HepG2 (cell line): ENCODE measurements at regions of chr3 and their contacts with region 1.

Region 1: GRCh38 chr3:116770815-116771450 is 61.4 kb downstream of the TUSC7 start:
- DNase-seq: peak; percentile 79
- ATAC-seq: peak; percentile 98
- H3K4me3 ChIP-seq: no peak overlapping the region
- H3K27ac ChIP-seq: no peak overlapping the region
- H3K4me1 ChIP-seq: no peaks in the 10 kb centered on the region
- H3K27me3 ChIP-seq: no peaks in the 10 kb centered on the region
- CTCF ChIP-seq: peak; percentile 93
- EP300 ChIP-seq: no peak
- POLR2A ChIP-seq: no peak
- RAD21 ChIP-seq: peak; percentile 69

Region 2: DNA sequence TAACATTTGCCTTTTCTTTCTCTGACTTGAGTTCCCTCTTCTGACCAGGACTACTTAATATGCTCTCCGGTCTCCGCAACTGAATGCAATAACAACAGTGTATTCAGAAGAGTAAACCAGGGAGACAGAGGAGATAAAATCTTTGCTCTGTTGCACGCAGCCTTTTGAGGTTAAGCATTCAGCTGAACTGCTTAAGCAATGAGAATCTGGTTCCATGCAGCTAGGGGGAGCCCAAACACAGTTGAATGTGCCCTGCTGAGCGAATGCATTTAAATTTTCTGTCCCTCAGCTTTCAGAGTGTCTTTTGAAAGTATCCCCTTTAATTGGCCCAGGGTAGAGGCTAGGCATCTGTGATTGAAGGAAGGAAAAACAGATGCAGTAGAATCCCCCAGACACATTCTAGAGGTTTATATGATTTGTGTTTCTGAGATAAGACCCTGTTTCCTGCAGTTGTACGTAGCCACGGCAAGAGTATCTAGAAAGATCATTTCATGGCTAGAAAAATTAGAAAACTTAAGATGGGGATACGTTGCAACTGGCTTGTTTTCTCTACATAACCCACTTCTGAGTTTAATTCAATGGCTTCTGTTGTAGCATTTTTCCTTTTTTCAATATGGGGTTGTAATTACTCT is 248.3 kb after region 1 on chr3:
- CTCF ChIA-PET with region 1: no interaction called
- POLR2A ChIA-PET with region 1: no interaction called
- in situ Hi-C with region 1: no loop called
- intact Hi-C with region 1: loop called (anchors 2 kb)
- DNase-seq: peak; percentile 10
- ATAC-seq: peak; percentile 97
- H3K4me3 ChIP-seq: no peak overlapping the region
- H3K27ac ChIP-seq: no peak overlapping the region
- H3K4me1 ChIP-seq: no peaks in the 10 kb centered on the region
- H3K27me3 ChIP-seq: peaks cover 0 to 18% of the 10 kb centered on the region in 2 experiments; a peak in 2 of 5 replicates
- CTCF ChIP-seq: peak; percentile 76
- EP300 ChIP-seq: no peak
- POLR2A ChIP-seq: no peak
- RAD21 ChIP-seq: no peak

Region 3: DNA sequence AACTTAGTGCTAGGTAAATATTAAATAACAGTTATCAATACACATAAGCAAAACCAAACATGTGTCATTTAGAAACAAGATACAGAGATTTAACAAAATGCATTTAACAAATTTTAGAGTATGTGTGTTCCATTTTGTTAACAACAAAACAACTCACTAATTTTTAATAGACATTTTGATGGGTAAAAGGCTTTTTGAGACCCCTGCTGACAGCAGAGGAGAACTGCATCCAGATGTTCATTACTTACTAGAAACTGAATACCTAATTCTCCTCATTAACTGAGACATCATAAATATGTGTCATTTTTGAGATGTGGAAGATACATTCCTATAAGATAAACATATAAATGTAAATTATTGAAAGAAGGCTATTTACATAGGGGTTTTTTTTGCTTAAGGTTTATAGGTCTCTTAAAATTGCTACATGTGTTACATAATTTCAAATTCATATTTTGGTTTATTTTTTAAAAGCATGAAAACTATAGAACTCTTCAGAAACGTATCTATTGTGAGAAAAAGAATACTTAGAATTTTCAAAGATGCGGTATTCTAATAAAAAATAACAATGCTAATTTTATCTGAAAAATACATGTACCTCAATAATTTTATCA is 948.5 kb after region 1 on chr3:
- CTCF ChIA-PET with region 1: interaction called, 11 read pairs
- POLR2A ChIA-PET with region 1: no interaction called
- in situ Hi-C with region 1: no loop called
- intact Hi-C with region 1: no loop called
- DNase-seq: peak; percentile 8
- ATAC-seq: no peak
- H3K4me3 ChIP-seq: no peak overlapping the region
- H3K27ac ChIP-seq: no peak overlapping the region
- H3K4me1 ChIP-seq: no peaks in the 10 kb centered on the region
- H3K27me3 ChIP-seq: no peaks in the 10 kb centered on the region
- CTCF ChIP-seq: peak; percentile 46
- EP300 ChIP-seq: no peak
- POLR2A ChIP-seq: no peak
- RAD21 ChIP-seq: no peak

Region 4: DNA sequence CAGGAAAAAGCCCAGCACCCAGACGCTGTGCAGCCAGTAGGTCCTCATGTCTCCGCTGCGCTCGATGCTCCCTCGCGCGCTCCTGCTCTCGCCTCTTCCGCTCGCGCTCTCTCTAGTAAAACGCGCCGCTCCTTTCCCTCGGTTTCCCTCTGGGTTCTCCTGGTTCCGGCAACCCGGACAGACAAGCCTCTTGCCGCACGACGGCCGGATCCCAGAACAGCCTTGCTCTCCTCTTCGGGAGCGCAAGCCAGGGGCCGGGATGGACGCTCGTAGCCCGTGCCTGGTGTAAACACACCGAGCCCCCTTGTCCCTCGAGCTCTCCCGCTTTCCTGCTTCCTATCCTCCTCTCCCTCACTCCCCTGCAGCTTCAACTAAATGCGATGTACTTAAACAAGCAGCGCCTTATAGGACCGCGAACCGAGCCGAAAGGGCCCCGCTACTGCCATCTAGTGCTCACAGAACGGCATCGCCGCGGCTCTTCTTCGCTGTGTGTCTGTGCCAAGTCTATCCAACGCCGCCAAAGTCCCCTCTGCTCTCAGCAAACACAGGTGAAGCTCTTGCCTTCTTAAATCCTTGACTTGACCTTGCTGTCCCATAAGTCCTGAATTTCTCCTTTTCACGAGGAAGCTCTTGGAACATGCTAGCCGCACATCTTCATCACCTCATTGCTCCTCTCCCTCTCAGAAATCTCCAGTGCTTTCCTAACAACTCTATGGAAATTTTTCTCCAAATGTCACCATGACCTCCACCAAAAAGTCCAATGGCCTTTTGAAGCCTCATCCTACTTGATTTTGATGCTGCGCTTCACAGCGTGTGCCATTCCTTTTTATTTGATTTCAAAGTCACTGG is 1226.5 kb after region 1 on chr3:
- CTCF ChIA-PET with region 1: interaction called, 5 read pairs
- POLR2A ChIA-PET with region 1: no interaction called
- in situ Hi-C with region 1: no loop called
- intact Hi-C with region 1: loop called (anchors 2 kb)
- DNase-seq: peak; percentile 56
- ATAC-seq: peak; percentile 99
- H3K4me3 ChIP-seq: 0 out of 6 replicates have a peak overlapping the region, but pooled peaks of 1 of the 3 experiments have one; percentile 10
- H3K27ac ChIP-seq: no peak overlapping the region
- H3K4me1 ChIP-seq: no peaks in the 10 kb centered on the region
- H3K27me3 ChIP-seq: peaks cover 0 to 3% of the 10 kb centered on the region in 2 experiments; a peak in 1 of 5 replicates
- CTCF ChIP-seq: peak; percentile 85
- EP300 ChIP-seq: no peak
- POLR2A ChIP-seq: no peak
- RAD21 ChIP-seq: no peak